ENCODE measurements at regions of chr17 and their contacts with region 1.

Region 1: DNA sequence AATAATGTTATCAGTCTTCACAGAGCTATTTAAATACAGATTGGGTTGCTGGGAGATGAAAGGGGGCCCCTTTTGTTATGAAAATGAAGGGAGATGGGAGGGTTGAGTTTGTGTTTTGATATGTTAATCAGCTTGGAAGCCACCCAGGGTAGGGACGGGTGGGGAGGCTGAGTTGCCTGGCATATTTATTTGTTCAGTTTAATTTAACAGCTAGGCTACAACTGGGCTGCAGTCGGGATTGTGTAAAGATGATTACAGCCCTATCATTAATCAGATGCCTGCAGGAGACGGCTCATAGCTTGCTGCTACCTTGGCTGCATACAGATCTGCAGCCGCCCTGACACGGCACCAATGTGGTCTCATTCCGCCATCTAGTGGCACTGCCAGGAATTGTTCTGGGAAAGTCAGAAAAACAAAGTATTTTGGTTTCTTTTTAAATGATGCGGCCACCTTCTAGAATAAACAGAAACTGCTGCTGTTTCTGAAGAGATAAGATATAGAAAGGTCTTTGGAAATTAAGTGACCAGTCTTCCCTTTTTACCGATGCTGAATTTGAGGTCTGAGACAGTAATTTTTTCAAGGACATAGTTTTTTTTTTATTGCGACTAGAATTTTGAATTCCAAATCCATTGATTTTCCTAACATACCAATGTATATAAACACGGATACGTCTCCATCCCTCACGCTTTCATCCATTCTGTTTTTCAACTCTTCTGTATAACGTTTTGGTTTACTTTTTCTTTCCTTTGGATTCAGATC is 458.0 kb upstream of the ASIC2 start:
- DNase-seq: peak; percentile 64
- H3K4me3 ChIP-seq: peak overlapping the region in 1 of 3 experiments; percentile 7
- H3K27ac ChIP-seq: no peak overlapping the region
- H3K4me1 ChIP-seq: no peaks in the 10 kb centered on the region
- H3K27me3 ChIP-seq: no peaks in the 10 kb centered on the region
- CTCF ChIP-seq: peak; percentile 70 to 79
- POLR2A ChIP-seq: no peak

Region 2: DNA sequence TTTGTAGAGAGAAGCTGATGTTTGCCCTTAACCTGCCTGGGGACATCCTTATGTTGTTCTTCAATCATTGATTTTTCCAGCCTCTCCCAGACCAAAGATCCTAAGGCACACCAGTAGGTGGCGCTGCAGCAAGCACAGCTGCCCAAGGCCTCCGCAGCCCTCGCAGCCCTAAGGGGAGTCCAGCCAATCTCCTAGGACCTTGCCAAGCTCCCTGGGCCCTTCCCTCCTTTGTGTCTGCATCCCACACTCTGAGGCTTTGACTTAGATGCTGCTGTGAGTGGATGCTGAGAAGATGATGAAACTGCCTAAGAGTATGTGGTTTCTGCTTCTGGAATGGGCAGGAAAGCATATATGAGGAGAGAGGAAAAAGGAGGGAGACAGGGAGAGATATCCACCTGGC is 712.4 kb before region 1 on chr17:
- CTCF ChIA-PET with region 1: interaction called, 13 read pairs
- POLR2A ChIA-PET with region 1: no interaction called
- dilution Hi-C with region 1: no loop called
- intact Hi-C with region 1: loop called (anchors 1 kb)
- DNase-seq: peak; percentile 21
- H3K4me3 ChIP-seq: no peak overlapping the region
- H3K27ac ChIP-seq: no peak overlapping the region
- H3K4me1 ChIP-seq: no peaks in the 10 kb centered on the region
- H3K27me3 ChIP-seq: no peaks in the 10 kb centered on the region
- CTCF ChIP-seq: peak; percentile 53 to 60
- POLR2A ChIP-seq: no peak

Region 3: DNA sequence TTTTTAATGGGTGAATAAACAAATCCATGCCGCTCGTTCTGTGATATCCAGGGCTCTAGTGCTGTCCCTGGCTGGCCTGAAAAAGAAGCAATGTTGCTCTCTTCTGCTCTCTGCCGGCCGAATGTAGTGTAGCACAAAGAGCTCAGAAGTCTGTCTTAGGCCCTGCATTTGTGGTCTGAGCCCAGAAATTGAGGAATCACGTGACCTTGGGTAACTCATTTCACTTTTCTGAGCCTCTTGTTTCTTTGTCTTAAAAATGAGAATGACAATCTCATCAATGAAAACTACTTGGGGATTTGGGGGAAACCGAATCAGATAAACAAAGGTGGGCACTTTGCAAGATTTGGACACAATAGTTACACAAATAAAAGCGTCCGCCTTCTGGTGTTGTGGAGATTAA is 76.4 kb before region 1 on chr17:
- CTCF ChIA-PET with region 1: interaction called, 3 read pairs
- POLR2A ChIA-PET with region 1: no interaction called
- dilution Hi-C with region 1: no loop called
- intact Hi-C with region 1: loop called (anchors 10 kb)
- DNase-seq: peak; percentile 67
- H3K4me3 ChIP-seq: no peak overlapping the region
- H3K27ac ChIP-seq: no peak overlapping the region
- H3K4me1 ChIP-seq: no peaks in the 10 kb centered on the region
- H3K27me3 ChIP-seq: no peaks in the 10 kb centered on the region
- CTCF ChIP-seq: peak; percentile 60 to 78
- POLR2A ChIP-seq: no peak

Region 4: DNA sequence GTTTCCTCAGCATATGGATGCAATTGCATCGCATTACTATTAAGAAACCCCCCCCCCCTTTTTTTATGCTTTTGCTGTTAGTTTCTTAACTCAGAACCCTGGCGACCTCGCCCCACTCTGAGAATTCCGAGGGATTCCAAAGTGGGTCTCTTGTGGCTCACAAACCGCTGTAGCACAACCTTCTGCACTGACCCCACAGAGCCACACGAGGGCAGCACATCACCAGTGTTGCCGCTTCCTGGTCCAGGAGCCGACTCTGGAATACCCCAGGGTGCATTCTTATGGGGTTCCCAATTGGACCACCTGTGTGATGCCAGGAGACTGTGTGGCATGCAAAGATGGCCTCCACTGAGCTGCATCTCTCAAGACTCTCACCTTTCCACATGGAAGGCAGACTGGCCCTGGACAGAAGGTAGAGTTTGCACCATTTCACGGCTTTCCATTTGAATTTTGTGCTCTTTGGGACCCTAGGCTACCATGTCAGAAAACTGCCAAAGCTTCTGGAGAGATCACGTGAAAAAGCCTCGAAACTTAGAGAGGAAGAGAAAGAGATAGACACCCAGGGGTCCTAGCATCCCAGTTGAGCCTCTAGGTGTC is 25.3 kb before region 1 on chr17:
- CTCF ChIA-PET with region 1: interaction called, 16 read pairs
- POLR2A ChIA-PET with region 1: no interaction called
- dilution Hi-C with region 1: no loop called
- intact Hi-C with region 1: loop called (anchors 1 kb)
- DNase-seq: peak; percentile 24
- H3K4me3 ChIP-seq: no peak overlapping the region
- H3K27ac ChIP-seq: no peak overlapping the region
- H3K4me1 ChIP-seq: no peaks in the 10 kb centered on the region
- H3K27me3 ChIP-seq: no peaks in the 10 kb centered on the region
- CTCF ChIP-seq: peak; percentile 64 to 86
- POLR2A ChIP-seq: no peak

Region 5: GRCh38 chr17:33786478-33786877 is 35.4 kb after region 1 on chr17:
- CTCF ChIA-PET with region 1: no interaction called
- POLR2A ChIA-PET with region 1: no interaction called
- dilution Hi-C with region 1: no loop called
- intact Hi-C with region 1: no loop called
- DNase-seq: no peak
- H3K4me3 ChIP-seq: no peak overlapping the region
- H3K27ac ChIP-seq: no peak overlapping the region
- H3K4me1 ChIP-seq: no peaks in the 10 kb centered on the region
- H3K27me3 ChIP-seq: no peaks in the 10 kb centered on the region
- CTCF ChIP-seq: no peak
- POLR2A ChIP-seq: no peak